AG04449 (cell line): ENCODE measurements at regions of chr3 and their contacts with region 1.

Region 1: GRCh38 chr3:150227839-150228238 is 180.3 kb upstream of the TSC22D2 start:
- DNase-seq: no peak
- H3K4me3 ChIP-seq: no peak overlapping the region
- CTCF ChIP-seq: peak; percentile 84

Region 2: DNA sequence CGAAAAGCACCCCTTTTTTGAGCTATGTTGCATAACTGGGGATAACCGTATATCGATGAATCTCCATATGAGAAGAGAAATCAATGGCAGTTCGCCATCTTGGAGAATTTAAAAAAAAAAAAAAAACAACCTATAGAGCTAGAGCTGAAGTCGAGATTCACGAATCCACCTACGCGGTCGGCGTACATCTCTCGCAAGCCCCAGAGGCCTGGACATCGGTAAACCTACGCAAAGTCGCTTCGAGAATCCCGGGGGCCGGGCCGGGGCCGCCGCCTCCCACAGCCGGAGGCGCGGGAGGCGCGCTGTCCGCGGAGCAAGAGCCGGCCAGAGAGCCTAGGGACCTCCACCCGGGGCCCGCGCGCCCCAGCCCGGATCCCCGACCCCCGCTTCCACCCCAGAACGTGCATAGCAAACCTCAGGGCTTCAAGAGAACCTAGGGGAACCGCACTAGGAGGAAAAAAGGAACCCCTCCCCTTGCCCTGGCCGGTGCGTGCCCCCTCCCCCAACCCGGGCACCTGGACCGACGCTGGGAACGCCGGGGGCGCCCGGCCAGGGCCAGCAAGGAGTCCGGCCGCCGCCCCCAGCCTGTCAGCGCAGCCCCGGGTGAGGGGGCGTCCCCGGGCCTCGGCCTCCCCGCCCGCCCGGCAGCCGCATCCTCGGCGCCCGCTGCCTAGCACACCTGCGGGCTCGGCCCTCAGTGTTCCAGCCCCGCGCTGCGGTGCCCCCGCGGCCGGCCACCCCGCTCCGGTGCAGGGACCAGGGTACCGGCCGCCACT is 257.7 kb before region 1 on chr3:
- CTCF ChIA-PET with region 1: interaction called, 47 read pairs
- POLR2A ChIA-PET with region 1: no interaction called
- DNase-seq: no peak
- H3K4me3 ChIP-seq: peak overlapping the region; percentile 83
- CTCF ChIP-seq: no peak

Region 3: DNA sequence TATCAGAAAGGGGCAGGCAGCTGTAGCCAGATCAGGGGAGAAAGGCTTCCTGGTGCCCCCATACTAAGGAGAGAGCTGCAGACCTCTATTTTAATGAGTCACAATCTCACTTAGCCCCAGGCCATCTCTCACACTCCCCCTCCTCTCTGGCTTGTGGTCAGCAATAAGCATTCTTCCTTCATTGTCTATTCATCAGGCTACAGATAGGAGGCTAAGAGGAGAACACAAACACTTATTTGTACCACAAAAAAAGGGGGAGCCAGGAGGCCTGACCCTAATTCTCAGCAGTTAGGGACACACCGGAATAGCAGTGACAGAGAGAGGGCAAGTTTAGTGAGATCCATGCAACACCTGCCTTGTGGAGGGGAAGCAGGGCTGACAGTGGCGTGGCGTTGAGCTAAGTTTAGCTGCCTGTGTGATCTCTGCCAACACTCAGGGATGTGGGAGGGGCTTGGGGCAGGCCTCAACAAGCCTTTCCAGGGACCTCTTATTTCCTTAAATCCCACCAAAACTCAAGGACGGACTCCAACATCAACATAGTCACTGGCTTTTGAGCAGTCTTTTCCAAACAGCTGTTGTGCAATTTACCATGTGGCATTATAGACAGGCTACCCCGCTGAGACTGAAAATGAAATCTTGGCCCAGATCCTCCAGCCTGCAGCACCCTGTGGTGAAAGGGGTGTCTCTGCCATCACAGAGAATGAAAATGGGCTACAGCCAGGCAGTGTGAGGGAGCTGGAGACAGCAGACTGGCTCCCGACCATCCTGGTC is 11.6 kb before region 1 on chr3:
- CTCF ChIA-PET with region 1: interaction called, 10 read pairs
- POLR2A ChIA-PET with region 1: no interaction called
- DNase-seq: peak; percentile 68
- H3K4me3 ChIP-seq: no peak overlapping the region
- CTCF ChIP-seq: no peak

Region 4: DNA sequence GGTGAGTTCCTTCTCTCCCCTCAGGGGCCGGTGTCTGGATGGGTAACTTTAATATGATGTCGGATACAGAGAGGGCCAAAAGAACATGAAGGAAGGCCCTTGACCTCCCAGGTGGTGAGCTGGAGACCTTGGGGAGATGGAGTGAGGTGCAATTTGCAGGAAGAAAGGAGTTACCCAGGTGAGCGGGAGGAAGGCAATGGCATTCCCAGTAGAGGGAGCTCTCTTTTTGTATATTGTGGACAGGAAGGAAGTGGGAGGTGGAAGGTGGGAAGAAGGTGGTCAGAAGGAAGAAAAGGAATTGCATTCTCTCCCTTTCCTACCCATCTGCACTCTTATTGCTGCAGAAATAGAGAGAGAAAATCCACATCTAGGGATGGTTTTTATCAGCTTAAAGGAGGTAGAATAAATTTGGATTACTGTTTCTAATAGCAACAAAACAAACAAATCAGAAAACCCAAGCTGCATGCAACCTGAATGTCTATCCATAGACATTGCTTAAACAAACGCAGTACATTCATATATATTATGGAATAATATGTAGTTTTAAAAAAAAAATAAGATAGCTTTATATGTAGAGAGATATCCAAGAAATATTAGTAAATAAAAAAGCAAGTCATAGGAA is 11.3 kb after region 1 on chr3:
- CTCF ChIA-PET with region 1: interaction called, 22 read pairs
- POLR2A ChIA-PET with region 1: no interaction called
- DNase-seq: no peak
- H3K4me3 ChIP-seq: no peak overlapping the region
- CTCF ChIP-seq: no peak

Region 5: GRCh38 chr3:150341891-150342290 is 114.1 kb after region 1 on chr3:
- CTCF ChIA-PET with region 1: no interaction called
- POLR2A ChIA-PET with region 1: no interaction called
- DNase-seq: no peak
- H3K4me3 ChIP-seq: no peak overlapping the region
- CTCF ChIP-seq: no peak

Region 6: GRCh38 chr3:150414258-150414657 is 186.4 kb after region 1 on chr3:
- CTCF ChIA-PET with region 1: interaction called, 17 read pairs
- POLR2A ChIA-PET with region 1: interaction called, 9 read pairs
- DNase-seq: no peak
- H3K4me3 ChIP-seq: peak overlapping the region; percentile 97
- CTCF ChIP-seq: no peak